K562 (cell line): ENCODE measurements at regions of chr1 and their contacts with region 1.

Region 1: DNA sequence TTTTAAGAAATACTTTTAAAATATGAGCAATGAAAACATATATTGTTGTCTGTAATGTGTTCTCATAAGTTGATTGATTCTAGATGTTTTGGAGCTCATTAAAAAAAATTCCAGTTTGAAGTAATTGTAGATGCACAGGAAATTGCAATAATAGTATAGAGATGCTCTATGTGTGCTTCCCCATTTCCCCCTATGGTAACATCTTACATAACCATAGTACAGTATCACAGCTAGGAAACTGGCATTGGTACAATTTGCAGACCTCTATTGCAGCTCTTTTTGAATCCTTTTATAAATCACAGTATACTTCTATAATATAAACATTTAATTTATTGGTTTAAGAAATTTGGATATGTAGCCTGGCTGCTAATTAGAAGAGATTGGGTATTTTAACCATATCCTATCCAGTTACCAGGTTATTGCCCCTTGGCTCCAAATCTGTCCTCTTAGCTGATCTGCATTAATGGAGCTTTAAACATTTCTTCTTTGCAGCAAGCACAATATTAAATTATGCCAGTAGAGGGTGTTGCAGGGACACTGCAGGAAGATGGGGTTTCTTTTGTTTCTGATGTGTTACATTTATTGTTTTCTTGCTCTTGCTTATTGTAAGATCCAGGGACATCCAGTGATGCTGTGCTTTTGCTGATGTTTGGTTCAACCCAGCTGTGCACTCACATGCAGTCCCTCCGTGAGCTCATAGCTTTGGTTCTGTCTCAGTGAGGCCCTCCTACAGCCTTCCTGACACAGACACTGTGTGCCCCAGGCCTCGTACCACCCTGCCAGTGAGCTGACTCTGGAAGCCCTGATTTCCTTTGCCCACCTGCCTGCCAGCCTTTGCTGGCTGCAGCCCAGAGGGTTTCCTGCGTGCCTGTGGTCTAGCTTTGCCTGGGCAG is 103.3 kb downstream of the RABGAP1L start:
- DNase-seq: peak; percentile 37 to 50 (median 46)
- ATAC-seq: peak; percentile 84
- H3K4me3 ChIP-seq: no peak overlapping the region
- H3K27ac ChIP-seq: no peak overlapping the region
- H3K4me1 ChIP-seq: peaks cover 0 to 7% of the 10 kb centered on the region in 2 experiments; a peak in 2 of 5 replicates
- H3K27me3 ChIP-seq: no peaks in the 10 kb centered on the region
- CTCF ChIP-seq: peak; percentile 73 to 94 (median 77)
- EP300 ChIP-seq: no peak
- POLR2A ChIP-seq: no peak
- RAD21 ChIP-seq: peak; percentile 78 to 89

Region 2: GRCh38 chr1:172745014-172745413 is 1517.6 kb before region 1 on chr1:
- CTCF ChIA-PET with region 1: no interaction called
- POLR2A ChIA-PET with region 1: no interaction called
- in situ Hi-C with region 1: no loop called
- intact Hi-C with region 1: loop called (anchors 10 kb)
- DNase-seq: peak; percentile 28 to 71 (median 39)
- ATAC-seq: peak; percentile 90
- H3K4me3 ChIP-seq: no peak overlapping the region
- H3K27ac ChIP-seq: no peak overlapping the region
- H3K4me1 ChIP-seq: peaks cover 3 to 7% of the 10 kb centered on the region in 2 experiments; a peak in 3 of 5 replicates
- H3K27me3 ChIP-seq: no peaks in the 10 kb centered on the region; a peak in 1 of 5 replicates
- CTCF ChIP-seq: peak; percentile 69 to 88 (median 70)
- EP300 ChIP-seq: no peak
- POLR2A ChIP-seq: no peak
- RAD21 ChIP-seq: peak; percentile 99

Region 3: GRCh38 chr1:174469687-174470086 is 207.1 kb after region 1 on chr1:
- CTCF ChIA-PET with region 1: no interaction called
- POLR2A ChIA-PET with region 1: no interaction called
- in situ Hi-C with region 1: no loop called
- intact Hi-C with region 1: loop called (anchors 5 kb)
- DNase-seq: no peak
- ATAC-seq: no peak; the same call in 2 of the 3 replicates
- H3K4me3 ChIP-seq: no peak overlapping the region
- H3K27ac ChIP-seq: no peak overlapping the region
- H3K4me1 ChIP-seq: no peaks in the 10 kb centered on the region
- H3K27me3 ChIP-seq: no peaks in the 10 kb centered on the region
- CTCF ChIP-seq: no peak
- EP300 ChIP-seq: no peak
- POLR2A ChIP-seq: no peak
- RAD21 ChIP-seq: no peak

Region 4: GRCh38 chr1:174726167-174726879 is 463.7 kb after region 1 on chr1:
- CTCF ChIA-PET with region 1: interaction called, 21 read pairs
- POLR2A ChIA-PET with region 1: no interaction called
- in situ Hi-C with region 1: no loop called
- intact Hi-C with region 1: loop called (anchors 2 kb)
- DNase-seq: peak in 1 of 4 experiments; percentile 25
- ATAC-seq: peak; percentile 46; the same call in 1 of the 3 replicates
- H3K4me3 ChIP-seq: no peak overlapping the region
- H3K27ac ChIP-seq: no peak overlapping the region
- H3K4me1 ChIP-seq: no peaks in the 10 kb centered on the region
- H3K27me3 ChIP-seq: no peaks in the 10 kb centered on the region
- CTCF ChIP-seq: peak in 1 of 3 experiments; percentile 69; a peak in 3 of 6 replicates
- EP300 ChIP-seq: no peak
- POLR2A ChIP-seq: no peak
- RAD21 ChIP-seq: peak; percentile 53 to 75

Region 5: GRCh38 chr1:174736831-174737230 is 474.2 kb after region 1 on chr1:
- CTCF ChIA-PET with region 1: no interaction called
- POLR2A ChIA-PET with region 1: interaction called, 3 read pairs
- in situ Hi-C with region 1: loop called (anchors 5 kb)
- intact Hi-C with region 1: no loop called
- DNase-seq: no peak
- ATAC-seq: no peak
- H3K4me3 ChIP-seq: no peak overlapping the region
- H3K27ac ChIP-seq: no peak overlapping the region
- H3K4me1 ChIP-seq: no peaks in the 10 kb centered on the region
- H3K27me3 ChIP-seq: no peaks in the 10 kb centered on the region
- CTCF ChIP-seq: no peak
- EP300 ChIP-seq: no peak
- POLR2A ChIP-seq: no peak
- RAD21 ChIP-seq: no peak

Region 6: DNA sequence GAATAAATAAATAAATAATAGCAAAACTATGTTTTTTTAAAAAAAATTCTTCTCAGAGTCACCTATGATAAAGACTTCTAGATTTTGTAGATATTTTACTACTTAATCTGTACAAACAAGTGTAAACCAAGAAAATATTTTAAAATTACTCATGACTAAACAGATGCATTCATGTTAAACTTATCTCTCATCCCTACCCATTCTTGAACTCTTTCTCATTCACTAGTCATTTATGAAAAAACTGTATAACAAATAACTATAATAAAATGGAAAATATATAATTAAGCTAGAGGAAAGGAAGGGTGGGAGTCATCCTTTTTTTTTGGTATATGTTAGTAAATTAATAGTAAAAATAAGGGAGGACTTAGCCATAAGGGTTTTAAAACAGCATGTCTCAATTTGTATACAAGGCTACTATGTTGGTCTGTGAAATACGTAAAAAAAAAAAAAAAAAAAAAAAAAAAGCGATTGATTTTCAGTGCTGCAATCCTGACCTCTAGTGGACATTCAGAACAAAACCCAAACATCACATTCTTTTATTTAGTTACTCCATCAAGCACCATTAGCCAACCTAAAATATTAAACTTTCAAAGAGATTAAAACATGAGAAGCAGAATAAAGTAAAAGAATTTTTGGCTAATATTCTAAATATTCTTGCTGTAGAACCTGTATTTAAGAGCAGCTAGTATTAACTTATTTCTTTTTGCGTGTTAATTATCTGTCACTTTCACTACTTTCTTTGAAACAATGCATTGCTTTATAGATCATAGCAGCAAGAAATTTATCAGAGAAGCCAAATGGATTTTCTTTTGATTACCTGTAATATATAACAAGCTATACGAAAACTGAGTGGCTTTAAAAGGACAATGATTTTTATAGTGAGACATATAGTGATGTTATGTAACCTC is 481.3 kb after region 1 on chr1:
- CTCF ChIA-PET with region 1: interaction called, 35 read pairs
- POLR2A ChIA-PET with region 1: interaction called, 3 read pairs
- in situ Hi-C with region 1: loop called (anchors 5 kb)
- intact Hi-C with region 1: loop called (anchors 1 kb)
- DNase-seq: peak; percentile 32 to 55 (median 44)
- ATAC-seq: peak; percentile 40
- H3K4me3 ChIP-seq: no peak overlapping the region
- H3K27ac ChIP-seq: no peak overlapping the region
- H3K4me1 ChIP-seq: peaks cover 4 to 15% of the 10 kb centered on the region in 2 experiments
- H3K27me3 ChIP-seq: no peaks in the 10 kb centered on the region
- CTCF ChIP-seq: peak; percentile 46 to 85 (median 51); a peak in 5 of 6 replicates
- EP300 ChIP-seq: no peak
- POLR2A ChIP-seq: no peak
- RAD21 ChIP-seq: peak; percentile 55 to 64